Right cardiac atrium (tissue), 5 donors: ENCODE measurements at regions of chr7 and their contacts with region 1.

Region 1: DNA sequence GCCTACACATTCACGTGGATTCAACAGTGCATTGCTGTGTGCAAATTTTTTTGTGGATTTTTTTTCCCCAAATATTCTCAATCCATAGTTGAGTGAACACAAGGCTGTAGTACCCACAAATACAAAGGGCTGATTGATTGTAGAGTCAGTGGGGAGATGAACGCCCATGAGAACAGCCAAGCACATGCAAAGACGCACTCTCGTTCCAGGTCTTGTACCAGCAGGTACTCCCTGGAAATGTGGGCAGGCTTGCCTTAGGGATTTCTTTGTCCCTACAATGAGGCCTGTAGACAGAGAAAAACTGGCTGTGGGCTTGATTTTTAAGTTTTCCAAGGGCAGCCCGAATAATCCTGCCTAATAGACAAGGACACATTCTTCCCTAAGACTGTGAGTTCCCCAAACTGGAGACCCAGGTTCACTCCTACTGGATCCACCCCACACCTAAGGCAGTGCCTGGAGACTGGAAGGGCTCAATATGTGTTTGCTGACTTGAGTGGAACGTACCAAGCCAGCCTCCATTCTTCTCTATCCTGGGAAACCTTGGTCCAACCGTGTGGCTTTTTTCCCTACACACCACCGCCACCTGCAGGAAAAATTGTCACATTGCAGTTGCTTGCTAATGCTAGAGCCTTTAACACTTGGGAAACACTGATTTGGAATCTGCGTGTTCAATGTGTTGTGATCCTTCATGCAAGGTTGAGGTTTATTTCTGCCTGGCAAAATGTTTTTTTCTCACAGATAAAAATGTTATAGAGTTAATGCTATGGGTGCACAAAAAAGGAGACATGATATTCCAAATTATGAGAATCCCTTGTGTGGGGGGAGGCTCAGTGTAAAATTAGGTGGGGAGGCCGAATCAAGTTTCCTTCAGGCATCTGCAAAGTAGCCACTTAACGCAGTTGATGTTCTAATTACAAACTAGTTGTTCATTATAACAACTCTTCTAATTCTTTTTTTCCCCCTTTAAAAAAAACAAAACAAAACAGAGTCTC is 49.3 kb downstream of the PPP1R17 start:
- DNase-seq: peak; percentile 31 to 66 (median 58)
- ATAC-seq: peak; percentile 72 to 73
- H3K4me3 ChIP-seq: no peak overlapping the region
- H3K27ac ChIP-seq: no peak overlapping the region
- H3K4me1 ChIP-seq: no peaks in the 10 kb centered on the region
- H3K27me3 ChIP-seq: no peaks in the 10 kb centered on the region

Region 2: DNA sequence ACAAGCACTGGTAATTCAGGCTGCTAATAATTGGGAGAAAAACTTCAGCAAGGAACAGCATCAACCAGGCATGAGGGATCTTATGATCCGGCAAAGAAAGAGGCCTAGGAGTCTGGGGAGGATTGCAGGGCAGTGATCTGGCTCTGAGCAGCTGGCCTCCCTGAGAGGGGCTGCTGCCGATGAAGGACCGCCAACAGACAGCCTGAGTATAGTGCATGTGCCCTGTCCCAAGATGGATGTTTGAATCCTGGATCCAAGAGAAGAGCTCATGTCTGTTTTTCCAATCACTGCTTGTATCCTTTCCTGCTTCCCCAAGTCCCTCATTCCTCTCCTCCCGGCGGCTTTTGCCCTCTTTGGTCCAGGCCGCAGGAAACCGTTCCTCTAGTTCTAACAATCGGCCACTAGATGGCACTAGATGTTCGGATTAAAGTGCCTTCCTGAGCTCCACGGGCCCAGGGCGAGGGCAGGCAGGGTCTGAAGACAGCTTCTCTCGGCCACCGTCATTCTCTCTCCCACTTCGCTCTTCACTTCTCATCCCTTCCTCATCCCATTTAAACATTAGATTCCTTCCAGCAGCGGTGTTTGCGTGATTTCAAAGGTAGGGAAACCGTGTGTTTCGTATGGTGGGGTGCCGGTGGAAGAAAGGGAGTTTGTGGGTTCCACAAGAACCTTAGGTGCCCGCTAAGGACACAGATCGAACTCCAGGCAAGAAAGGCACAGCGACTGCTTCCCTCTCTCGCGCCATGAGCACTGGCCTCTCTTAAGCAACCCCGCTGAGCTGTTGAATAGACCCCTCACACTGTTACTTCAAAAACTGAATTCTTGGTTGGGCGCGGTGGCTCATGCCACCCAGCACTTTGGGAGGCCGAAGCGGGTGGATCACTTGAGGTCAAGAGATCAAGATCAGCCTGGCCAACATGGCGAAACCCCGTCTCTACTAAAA is 601.8 kb before region 1 on chr7:
- intact Hi-C with region 1: loop called in 3 of 4 experiments (anchors 5 to 10 kb)
- DNase-seq: peak; percentile 76 to 90 (median 85)
- ATAC-seq: peak; percentile 97
- H3K4me3 ChIP-seq: no peak overlapping the region
- H3K27ac ChIP-seq: no peak overlapping the region
- H3K4me1 ChIP-seq: no peaks in the 10 kb centered on the region
- H3K27me3 ChIP-seq: no peaks in the 10 kb centered on the region

Region 3: GRCh38 chr7:31443457-31443856 is 292.8 kb before region 1 on chr7:
- intact Hi-C with region 1: loop called in 2 of 4 experiments (anchors 10 kb)
- DNase-seq: no peak
- ATAC-seq: peak; percentile 63
- H3K4me3 ChIP-seq: no peak overlapping the region
- H3K27ac ChIP-seq: no peak overlapping the region
- H3K4me1 ChIP-seq: no peaks in the 10 kb centered on the region
- H3K27me3 ChIP-seq: no peaks in the 10 kb centered on the region

Region 4: DNA sequence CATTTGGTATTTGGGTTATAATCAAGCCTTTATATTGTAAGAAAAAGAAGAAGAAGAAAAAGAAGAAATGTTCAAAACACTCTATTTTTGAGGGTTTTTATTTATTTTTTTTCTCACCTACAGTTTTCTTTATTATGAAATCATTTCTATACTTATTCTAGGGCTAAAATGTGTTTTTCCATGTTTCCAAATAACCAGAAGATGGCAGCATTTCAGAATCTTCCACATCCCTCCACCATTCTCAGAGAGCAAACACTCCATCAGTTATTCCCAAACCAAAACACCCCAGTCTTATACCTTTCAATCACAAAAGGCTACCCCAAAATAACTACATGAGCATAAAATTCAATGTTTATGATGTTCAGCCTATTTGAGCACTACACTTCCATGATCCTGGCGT is 88.0 kb before region 1 on chr7:
- intact Hi-C with region 1: loop called in 2 of 4 experiments (anchors 5 to 10 kb)
- DNase-seq: no peak
- ATAC-seq: no peak
- H3K4me3 ChIP-seq: no peak overlapping the region
- H3K27ac ChIP-seq: no peak overlapping the region
- H3K4me1 ChIP-seq: no peaks in the 10 kb centered on the region
- H3K27me3 ChIP-seq: no peaks in the 10 kb centered on the region